G401 (cell line): ENCODE measurements at regions of chr14 and their contacts with region 1.

Region 1: DNA sequence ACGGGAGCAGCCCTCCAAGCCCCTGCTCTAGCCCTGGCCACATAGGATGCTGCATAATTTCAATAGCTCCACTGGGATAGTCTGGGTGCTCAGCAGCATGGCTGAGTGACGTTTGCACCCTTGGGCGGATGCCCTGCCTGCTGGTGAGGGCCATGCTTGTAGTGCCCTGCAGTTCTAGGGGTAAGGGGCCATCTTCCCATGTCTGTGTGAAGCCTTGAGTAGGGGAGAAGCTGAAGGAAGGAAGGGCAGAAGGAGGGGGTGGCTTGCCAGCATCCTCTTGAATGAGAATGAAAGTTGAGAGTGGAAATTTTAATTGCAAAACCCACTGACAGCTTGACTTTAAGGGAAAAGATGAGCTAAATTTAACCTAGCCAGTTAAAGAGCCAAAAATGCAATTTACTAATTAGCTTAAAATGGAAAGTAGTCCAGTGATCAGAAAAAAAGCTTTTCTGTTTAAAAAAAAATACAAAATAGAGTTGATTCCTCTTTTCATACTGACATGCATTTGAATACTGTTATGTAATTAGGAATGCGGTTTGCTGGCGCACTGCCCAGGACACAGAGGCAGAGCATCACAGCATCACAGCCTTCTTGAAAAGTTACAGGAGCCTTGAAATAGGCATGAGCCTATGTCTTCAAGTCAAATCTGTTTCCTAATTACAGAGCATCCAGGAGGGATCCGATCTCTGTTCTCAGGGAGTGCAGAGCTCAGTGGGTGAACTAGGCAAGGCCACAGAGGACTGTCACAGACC is 18.5 kb upstream of the EML1 start:
- DNase-seq: peak; percentile 72

Region 2: DNA sequence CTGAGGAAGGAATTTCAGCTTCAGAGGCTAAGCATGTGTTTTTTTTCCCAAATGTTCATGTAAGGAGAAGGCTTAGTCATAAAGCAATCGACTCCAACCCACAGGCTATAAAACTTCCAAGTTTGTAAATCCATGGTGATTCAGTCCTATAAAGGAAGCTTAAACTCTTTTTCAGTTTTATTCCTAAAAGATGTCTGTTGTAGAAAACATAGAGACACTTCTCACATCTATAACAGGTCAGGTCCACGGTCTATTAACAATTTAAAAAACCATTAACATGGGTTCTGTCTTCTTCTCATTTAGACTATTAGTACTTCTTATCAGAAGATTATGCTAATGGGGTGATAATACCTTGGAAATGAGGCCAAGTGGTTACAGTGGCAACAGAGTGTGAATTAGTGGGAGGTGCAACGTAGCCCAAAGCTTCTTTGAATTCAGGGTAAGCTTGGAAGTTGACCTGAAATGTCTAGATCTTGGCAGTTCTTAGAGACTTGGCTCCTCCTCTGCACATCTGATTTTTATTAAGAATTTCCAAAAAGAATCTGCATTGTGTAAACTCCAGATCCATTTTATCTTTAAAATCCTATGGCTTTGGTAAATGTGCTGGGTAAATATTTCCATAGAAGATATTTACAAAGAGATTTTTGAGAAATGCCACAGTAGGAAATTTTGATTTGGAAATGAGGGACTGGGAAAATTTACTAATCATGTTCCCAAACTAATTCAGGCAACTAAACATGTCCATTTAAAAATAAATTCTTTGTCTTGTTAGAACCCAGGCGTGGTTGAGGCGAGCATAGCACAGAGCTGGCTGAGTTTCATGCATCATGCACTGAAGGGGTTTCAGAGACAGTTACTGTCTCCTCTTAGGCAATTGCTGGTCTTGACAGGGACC is 104.9 kb after region 1 on chr14:
- in situ Hi-C with region 1: loop called (anchors 10 kb)
- DNase-seq: no peak